Left cardiac atrium (tissue), 4 donors: ENCODE measurements at regions of chr14 and their contacts with region 1.

Region 1: GRCh38 chr14:88013750-88014349 is 8.9 kb downstream of the GPR65 start:
- DNase-seq: peak; percentile 71
- ATAC-seq: peak; percentile 89 to 95

Region 2: DNA sequence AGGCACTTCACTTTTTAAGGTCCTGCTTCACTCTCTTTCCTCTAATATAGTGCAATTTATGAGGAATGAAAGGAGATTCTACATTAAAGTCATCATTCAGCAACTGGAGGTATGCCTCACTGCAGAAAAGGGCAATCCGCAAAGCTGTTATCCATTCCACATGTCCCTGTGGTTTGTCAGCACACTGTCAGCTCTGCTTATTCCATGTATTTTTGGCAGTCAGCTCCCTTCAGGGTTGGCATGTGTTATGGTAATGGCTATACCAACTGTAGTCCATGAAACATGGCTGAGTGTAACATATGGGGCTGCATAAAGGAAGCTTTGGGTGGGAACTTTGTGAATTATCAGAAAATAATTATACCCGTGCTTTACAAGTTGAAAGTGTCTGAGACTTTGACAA is 174.9 kb before region 1 on chr14:
- intact Hi-C with region 1: no loop called
- DNase-seq: no peak
- ATAC-seq: no peak

Region 3: GRCh38 chr14:88168498-88169165 is 154.8 kb after region 1 on chr14:
- intact Hi-C with region 1: loop called in 1 of 2 experiments (anchors 2 kb)
- DNase-seq: no peak
- ATAC-seq: peak; percentile 74 to 85

Region 4: GRCh38 chr14:88380405-88380804 is 366.6 kb after region 1 on chr14:
- intact Hi-C with region 1: loop called in 1 of 2 experiments (anchors 2 kb)
- DNase-seq: no peak
- ATAC-seq: no peak

Region 5: DNA sequence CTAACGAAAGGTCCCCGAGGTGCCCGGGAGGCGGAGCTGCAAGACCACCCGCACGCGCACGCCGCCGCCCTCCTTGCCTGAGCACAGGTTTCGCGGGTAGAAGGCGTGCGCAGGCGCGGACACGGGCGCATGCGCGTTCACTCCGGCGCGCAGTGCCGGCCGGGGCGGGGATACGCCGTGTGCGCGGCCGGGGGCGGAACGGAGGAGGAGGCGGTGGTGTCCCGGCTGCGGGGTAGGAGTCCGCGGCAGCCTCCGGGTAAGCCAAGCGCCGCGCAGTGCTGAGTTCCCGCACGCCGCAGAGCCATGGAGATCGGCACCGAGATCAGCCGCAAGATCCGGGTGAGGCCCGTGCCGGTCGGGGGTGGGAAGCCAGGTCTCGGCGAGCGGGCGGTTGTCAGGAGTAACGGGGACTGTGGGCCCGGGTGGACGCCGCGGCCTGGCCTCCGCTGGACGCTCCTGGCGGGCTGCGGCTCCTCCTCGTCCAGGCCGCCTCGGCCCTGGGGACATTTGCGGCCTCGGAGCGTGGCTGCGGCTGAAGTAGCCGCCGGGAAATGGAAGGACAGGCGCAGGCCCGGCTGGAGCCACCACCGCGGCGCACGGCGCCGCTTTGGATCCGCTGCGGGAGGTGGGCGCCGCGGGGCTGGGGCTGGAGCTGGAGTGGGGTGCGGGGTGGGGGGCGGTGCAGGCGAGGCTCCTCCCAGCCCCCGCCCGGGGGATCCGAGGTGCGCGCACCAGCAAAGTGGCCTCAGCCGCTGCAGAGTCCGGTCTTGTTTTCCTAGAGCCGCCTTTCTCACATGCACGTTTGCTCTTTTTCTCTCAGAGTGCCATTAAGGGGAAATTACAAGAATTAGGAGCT is 549.2 kb after region 1 on chr14 and contains the start of gene ZC3H14:
- intact Hi-C with region 1: loop called in 1 of 2 experiments (anchors 10 kb)
- DNase-seq: peak; percentile 88
- ATAC-seq: peak; percentile 98 to 99
- total RNA-seq, gene ZC3H14: 38.0 to 41.4 TPM